Activated T-helper 1 cell treated with anti-CD3 and anti-CD28 coated beads, Interleukin-12 subunit alpha, Interleukin-12 subunit beta, Interleukin-2, Interleukin-4 antibody, amounts not matched to agents 30 ng/mL and 10 ng/mL and 1 ng/mL, durations not matched to agents 14 hours and 24 hours and 36 hours (primary cell): ENCODE measurements at regions of chr6 and their contacts with region 1.

Region 1: DNA sequence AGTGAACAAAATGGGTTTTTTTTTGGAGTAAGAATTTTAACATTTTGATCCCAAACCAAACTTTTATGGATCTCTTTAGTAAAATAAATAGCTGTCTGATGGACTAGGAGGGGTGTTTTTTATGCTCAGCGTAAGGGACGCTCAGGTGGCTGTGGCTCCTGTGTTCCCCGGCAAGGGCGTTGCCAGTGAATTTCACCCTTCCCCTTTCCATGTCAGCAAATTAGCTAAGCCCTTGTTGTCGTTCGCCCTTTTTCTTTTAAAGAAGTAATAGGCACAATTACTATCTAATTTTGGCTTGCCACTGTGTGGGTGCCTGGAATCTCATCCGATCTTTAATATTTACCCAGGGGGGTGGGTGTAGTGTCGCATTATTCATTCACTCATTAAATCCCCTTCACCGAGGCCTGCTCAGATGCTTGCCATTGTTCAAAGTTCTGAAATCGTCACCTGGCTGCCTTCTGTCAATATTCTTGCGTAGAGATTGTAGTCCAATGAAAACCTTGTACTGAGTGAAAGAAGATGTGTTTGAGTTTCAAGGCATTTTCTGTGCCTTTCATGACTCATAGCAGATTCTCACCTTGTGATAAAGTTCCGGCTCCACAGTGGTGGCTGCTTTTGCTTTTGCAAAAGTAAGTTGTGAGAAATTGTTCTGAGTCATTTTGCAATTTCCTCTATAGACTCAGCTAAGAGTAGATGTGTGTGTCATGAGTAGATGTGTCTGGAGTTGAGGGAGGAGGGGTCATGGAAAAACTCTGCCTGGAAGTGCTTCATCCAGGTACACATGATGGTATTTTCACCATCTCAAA is 40.0 kb upstream of the CLDN20 start:
- DNase-seq: peak; percentile 65
- H3K4me3 Mint-ChIP-seq: peak overlapping the region; percentile 70
- H3K27ac Mint-ChIP-seq: peak overlapping the region; percentile 91
- H3K4me1 Mint-ChIP-seq: peaks cover 34% of the 10 kb centered on the region
- H3K27me3 Mint-ChIP-seq: peaks cover 2% of the 10 kb centered on the region

Region 2: GRCh38 chr6:154606457-154606856 is 617.4 kb before region 1 on chr6:
- intact Hi-C with region 1: loop called (anchors 1 kb)
- DNase-seq: peak; percentile 66
- H3K4me3 Mint-ChIP-seq: peak overlapping the region; percentile 65
- H3K27ac Mint-ChIP-seq: peak overlapping the region; percentile 86
- H3K4me1 Mint-ChIP-seq: peaks cover 24% of the 10 kb centered on the region
- H3K27me3 Mint-ChIP-seq: peaks cover 3% of the 10 kb centered on the region

Region 3: DNA sequence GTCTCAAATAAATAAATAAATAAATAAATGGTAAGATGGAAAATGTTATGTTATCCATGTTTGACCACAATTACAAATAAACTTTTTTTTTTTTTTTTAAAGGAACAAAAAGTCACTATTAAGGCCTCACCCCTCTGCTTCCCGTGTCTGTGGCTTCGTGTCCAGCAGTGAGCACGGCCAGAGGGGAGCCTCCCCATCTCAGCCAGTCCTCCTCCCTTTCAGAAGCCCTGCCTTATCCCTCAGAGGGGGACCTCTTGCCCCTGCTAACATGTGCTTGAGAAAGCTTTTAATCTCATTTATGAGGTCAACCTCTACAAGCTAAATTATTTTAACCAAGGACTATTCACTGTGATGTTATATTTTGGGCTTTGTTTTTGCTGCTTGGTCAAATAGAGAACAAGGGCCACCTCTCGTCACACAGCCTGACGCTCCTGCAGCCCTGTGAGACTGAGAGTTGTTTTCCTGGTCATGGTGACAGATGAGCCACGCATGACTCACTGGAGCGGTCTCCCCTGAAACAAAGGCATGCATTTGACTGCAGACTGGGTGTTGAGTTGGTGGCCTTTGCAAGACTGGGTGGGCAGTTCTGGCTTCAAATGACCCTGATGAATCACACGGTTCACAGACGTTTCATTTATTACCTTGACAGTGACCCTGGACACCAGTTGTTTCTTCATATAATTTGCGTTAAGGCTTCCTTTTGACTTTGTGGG is 97.0 kb before region 1 on chr6:
- intact Hi-C with region 1: loop called (anchors 1 kb)
- DNase-seq: no peak
- H3K4me3 Mint-ChIP-seq: peak overlapping the region; percentile 60
- H3K27ac Mint-ChIP-seq: peak overlapping the region; percentile 92
- H3K4me1 Mint-ChIP-seq: peaks cover 51% of the 10 kb centered on the region
- H3K27me3 Mint-ChIP-seq: no peaks in the 10 kb centered on the region